BJ (cell line): ENCODE measurements at regions of chr6 and their contacts with region 1.

Region 1: DNA sequence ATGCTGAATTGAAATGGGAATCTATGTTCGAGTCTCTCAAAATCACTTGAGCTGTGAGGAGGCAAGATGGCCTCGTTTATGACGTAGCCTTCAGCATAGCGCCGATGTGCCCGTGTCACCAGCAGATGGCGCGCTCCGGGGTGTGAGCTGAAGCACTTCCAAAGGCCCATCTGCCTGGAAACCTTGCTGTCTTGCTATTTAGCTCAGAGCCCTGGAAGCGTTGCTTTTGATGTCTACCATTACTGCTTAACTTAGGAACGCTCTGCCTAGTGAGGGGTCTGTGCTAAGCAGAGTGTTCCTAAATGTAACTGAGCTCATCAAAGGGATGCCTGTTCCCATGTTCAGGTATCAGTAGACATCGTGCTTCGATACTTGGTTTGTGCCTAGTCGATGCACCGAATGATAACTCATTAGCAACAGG is 67.7 kb downstream of the SYCP2L start:
- DNase-seq: no peak
- H3K4me3 ChIP-seq: no peak overlapping the region
- H3K27me3 ChIP-seq: no peaks in the 10 kb centered on the region
- CTCF ChIP-seq: peak; percentile 89

Region 2: GRCh38 chr6:10968776-10969175 is 14.2 kb after region 1 on chr6:
- CTCF ChIA-PET with region 1: interaction called, 10 read pairs
- POLR2A ChIA-PET with region 1: no interaction called
- DNase-seq: peak; percentile 27
- H3K4me3 ChIP-seq: no peak overlapping the region
- H3K27me3 ChIP-seq: no peaks in the 10 kb centered on the region
- CTCF ChIP-seq: no peak

Region 3: DNA sequence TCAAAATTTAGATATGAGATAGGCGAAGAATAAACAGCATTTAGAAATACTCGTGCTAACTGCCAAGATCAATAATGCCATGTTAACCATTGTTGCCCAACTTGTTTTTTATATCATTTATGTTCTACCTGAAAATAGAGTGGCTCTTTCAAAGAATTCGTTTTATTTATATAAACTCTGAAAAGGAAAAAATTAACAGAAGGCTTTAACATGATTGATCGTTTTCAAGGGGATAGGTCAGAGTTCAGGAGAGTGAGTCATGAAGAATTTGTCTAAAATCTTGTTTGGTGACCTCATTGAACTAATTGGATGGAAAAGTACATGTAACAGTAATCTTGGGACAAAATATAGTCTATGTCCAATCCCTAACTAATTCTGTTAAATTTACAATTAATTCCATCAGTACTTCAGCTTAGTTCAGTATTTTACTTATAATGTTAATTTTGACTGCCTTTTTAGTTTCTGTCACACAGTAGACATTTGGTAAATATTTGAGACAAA is 100.6 kb after region 1 on chr6:
- CTCF ChIA-PET with region 1: interaction called, 16 read pairs
- POLR2A ChIA-PET with region 1: no interaction called
- DNase-seq: no peak
- H3K4me3 ChIP-seq: no peak overlapping the region
- H3K27me3 ChIP-seq: no peaks in the 10 kb centered on the region
- CTCF ChIP-seq: no peak

Region 4: DNA sequence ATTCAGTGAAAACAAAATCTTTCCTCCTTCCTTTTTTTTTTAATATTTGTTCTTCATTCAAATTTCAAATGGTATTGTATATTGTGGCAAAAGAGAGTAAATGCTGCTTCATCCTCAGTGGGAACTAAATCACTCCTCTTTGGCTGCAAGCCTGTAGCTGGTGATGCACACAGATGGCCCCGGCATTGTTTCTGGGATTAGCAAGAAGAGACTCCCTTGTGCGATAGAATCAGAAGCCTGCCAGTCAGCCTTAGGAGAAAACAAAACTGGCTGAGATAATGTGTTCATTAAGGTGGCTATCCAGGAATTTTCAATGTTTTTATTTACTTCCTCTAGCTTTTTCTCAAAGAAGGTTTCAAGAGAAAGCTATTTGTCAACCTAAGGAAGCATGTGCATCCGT is 110.2 kb after region 1 on chr6:
- CTCF ChIA-PET with region 1: interaction called, 159 read pairs
- POLR2A ChIA-PET with region 1: interaction called, 5 read pairs
- DNase-seq: no peak
- H3K4me3 ChIP-seq: no peak overlapping the region
- H3K27me3 ChIP-seq: no peaks in the 10 kb centered on the region
- CTCF ChIP-seq: no peak

Region 5: DNA sequence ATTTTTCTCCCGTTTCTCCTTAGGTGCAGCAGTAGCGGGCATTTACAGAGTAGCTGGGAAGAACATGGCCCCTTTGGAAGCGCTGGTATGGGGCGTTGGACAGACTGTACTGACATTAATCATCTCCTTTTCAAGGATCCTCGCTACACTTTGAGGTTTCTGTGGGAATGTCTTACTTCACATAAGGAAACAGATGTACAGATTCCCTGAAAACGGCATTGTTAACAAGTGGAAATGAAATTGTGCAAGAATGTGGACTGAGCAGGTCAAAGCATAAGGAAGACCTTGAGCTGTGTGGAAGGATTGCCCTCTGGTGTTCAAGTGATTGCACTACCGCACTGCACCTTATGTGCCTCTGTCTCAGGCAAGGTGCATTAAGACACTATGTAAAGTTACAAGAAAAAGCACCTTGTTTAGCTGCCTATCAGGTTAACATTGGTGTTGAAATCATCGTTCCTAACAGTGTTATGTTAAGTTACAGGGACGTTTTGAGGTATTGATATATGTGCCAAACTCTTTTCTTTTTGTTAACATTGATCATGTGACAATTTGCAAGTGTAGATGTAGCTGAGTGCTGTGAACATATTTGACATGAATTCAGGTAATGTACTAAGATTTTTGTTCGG is 620.9 kb after region 1 on chr6:
- CTCF ChIA-PET with region 1: interaction called, 17 read pairs
- POLR2A ChIA-PET with region 1: no interaction called
- DNase-seq: peak; percentile 28
- H3K4me3 ChIP-seq: no peak overlapping the region
- H3K27me3 ChIP-seq: no peaks in the 10 kb centered on the region
- CTCF ChIP-seq: peak; percentile 95